CD4-positive, alpha-beta T cell (primary cell): ENCODE measurements at regions of chr19 and their contacts with region 1.

Region 1: DNA sequence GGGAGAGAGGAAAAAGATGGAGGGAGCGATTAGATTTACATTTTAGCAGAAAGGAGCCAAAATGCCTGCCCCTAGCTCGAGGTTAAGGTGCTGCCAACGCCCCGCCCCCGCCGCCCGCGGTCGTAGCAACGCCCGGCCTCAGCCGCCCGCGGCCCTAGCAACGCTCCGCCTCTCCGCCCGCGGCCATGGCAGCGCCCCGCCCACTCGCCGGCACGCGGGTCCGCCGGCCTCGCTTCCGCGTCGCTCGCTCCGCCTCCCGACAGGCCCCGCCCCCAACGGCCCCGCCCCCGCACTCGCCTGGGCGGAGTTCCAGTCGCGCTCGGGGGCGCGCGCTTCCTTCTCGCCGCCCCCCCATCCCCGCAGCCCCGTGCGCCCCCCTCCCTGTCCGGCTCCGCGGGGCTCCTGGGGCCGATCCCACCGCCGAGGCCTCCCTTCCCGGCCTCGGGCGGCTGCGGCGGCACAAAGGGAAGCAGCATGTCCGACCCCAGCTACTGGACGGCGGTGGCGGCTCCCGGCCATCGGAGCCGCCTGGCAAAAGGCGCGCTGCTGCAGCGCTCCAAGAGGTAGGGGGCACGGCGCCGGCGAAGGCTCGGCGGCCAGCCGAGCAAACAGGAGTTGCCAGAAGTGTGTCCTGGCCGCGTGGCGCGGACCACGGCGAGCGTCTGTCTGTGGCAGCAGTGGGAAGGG is 20.3 kb downstream of the MAST3 start:
- DNase-seq: peak; percentile 88 to 99 (median 96)
- ATAC-seq: peak; percentile 72
- H3K4me3 ChIP-seq: peak overlapping the region; percentile 86
- H3K4me3 Mint-ChIP-seq: peak overlapping the region; percentile 90
- H3K27ac ChIP-seq: peak overlapping the region; percentile 77 to 80
- H3K27ac Mint-ChIP-seq: peak overlapping the region; percentile 97
- H3K4me1 ChIP-seq: peaks cover 58% of the 10 kb centered on the region
- H3K4me1 Mint-ChIP-seq: peaks cover 37% of the 10 kb centered on the region
- H3K27me3 ChIP-seq: no peaks in the 10 kb centered on the region
- H3K27me3 Mint-ChIP-seq: no peaks in the 10 kb centered on the region
- CTCF ChIP-seq: no peak

Region 2: DNA sequence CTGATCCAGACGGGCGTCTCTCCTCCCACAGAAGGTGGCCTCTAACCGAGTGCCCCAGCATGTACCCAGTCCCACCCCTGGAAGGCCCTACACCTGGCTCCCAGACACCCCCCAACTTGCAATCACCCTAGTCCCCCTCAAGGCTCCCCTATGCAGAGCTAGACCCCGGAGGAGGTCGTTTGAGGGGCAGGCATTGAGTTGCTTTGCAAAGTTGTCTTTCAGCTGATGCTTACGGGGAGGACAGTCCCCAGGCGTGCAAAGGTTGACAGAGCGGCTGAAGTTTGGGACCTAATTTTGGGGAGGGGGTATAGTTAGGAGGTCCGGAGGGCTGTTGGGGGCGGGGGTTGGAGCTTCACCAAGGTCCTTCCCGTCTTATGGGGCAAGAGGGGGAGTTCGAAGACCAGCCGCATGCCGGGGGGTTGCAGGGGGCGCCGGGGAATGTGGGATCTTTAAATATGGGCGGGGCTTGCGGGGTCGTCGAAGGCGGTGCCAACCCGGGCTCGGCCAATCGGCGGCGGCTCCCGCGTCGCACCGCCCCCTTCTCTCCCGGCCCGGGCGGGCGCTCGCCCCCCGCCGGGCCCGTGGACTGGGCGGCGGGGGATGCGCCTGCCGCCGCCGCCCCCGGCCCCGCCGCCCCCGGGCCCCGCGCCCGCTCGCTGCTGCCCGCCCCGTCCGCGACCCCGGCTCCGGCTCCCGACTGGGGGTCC is 151.1 kb before region 1 on chr19 and contains the start of gene KCNN1:
- CTCF ChIA-PET with region 1: no interaction called
- POLR2A ChIA-PET with region 1: no interaction called
- intact Hi-C with region 1: no loop called
- DNase-seq: peak in 2 of 14 experiments; percentile 25 to 29
- ATAC-seq: no peak
- H3K4me3 ChIP-seq: no peak within 1 kb of the TSS
- H3K4me3 Mint-ChIP-seq: peak within 1 kb of the TSS; percentile 34
- H3K27ac ChIP-seq: no peak within 1 kb of the TSS
- H3K27ac Mint-ChIP-seq: no peak within 1 kb of the TSS
- H3K4me1 ChIP-seq: peaks cover 13% of the 10 kb centered on the region
- H3K4me1 Mint-ChIP-seq: peaks cover 9% of the 10 kb centered on the region
- H3K27me3 ChIP-seq: peaks cover 30% of the 10 kb centered on the region in 2 experiments
- H3K27me3 Mint-ChIP-seq: peaks cover 56% of the 10 kb centered on the region
- CTCF ChIP-seq: no peak
- total RNA-seq, gene KCNN1: not detected

Region 3: DNA sequence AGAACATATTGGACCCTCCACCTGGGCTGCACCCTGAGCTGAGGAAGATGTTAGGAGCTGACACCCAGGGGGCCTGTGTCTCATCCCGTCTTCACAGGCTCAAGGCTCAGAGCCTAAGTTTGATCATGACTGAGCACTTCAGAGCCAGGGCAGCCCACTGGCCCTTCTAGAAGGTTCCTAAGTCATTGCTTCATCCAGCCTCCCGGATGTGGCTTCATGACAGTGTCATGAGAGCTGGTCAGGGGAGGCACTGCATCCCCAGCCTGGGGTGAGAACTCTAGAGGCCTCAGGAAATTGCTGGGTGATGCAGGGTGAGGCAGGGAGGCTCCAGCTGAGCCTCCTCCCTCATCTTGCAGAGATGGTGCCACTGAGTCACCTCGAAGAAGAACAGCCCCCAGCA is 10.2 kb after region 1 on chr19:
- CTCF ChIA-PET with region 1: no interaction called
- POLR2A ChIA-PET with region 1: interaction called, 14 read pairs
- intact Hi-C with region 1: no loop called
- DNase-seq: peak in 3 of 14 experiments; percentile 31 to 49 (median 39)
- ATAC-seq: no peak
- H3K4me3 ChIP-seq: no peak overlapping the region
- H3K4me3 Mint-ChIP-seq: no peak overlapping the region
- H3K27ac ChIP-seq: no peak overlapping the region
- H3K27ac Mint-ChIP-seq: no peak overlapping the region
- H3K4me1 ChIP-seq: peaks cover 5% of the 10 kb centered on the region
- H3K4me1 Mint-ChIP-seq: no peaks in the 10 kb centered on the region
- H3K27me3 ChIP-seq: no peaks in the 10 kb centered on the region
- H3K27me3 Mint-ChIP-seq: no peaks in the 10 kb centered on the region
- CTCF ChIP-seq: no peak

Region 4: GRCh38 chr19:18160971-18161635 is 43.3 kb after region 1 on chr19:
- CTCF ChIA-PET with region 1: no interaction called
- POLR2A ChIA-PET with region 1: interaction called, 3 read pairs
- intact Hi-C with region 1: loop called in 1 of 2 experiments (anchors 2 kb)
- DNase-seq: peak; percentile 58 to 92 (median 82)
- ATAC-seq: peak; percentile 99
- H3K4me3 ChIP-seq: peak overlapping the region; percentile 20
- H3K4me3 Mint-ChIP-seq: no peak overlapping the region
- H3K27ac ChIP-seq: no peak overlapping the region
- H3K27ac Mint-ChIP-seq: no peak overlapping the region
- H3K4me1 ChIP-seq: peaks cover 21% of the 10 kb centered on the region
- H3K4me1 Mint-ChIP-seq: peaks cover 12% of the 10 kb centered on the region
- H3K27me3 ChIP-seq: no peaks in the 10 kb centered on the region
- H3K27me3 Mint-ChIP-seq: no peaks in the 10 kb centered on the region
- CTCF ChIP-seq: peak; percentile 53

Region 5: DNA sequence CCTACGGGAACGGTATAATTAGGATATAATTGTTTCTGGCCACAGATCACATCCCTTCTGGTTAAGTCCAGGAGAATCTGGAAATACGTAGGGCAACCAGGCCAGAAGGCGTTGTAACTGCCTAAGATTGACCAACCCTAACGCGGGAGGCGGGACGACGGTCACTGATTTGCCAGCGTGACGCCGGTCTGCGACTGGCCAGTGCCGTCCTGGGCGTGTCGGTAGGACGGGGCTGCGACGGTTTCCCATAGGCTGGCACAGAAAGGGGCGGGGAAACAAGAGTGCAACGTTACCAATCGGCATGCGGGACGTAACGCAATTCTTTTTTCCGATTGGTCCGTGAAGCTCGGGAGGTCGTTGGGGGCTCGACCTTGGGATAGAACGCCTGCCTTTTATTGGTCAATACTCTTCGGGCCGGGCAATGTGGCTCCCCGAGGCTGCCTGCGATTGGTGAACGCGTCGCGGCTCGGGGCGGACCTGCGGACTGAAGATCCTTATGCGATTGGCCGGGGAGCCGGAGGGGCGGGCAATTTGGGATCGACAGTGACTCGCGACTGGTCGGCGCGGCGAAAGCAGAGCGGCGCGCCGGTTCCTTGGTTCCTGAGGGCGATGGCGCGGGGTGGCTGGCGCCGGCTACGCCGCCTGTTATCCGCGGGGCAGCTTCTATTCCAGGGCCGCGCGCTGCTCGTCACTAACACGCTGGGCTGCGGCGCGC is 75.0 kb after region 1 on chr19 and contains the start of gene MPV17L2:
- CTCF ChIA-PET with region 1: interaction called, 4 read pairs
- POLR2A ChIA-PET with region 1: interaction called, 5 read pairs
- intact Hi-C with region 1: loop called in 1 of 2 experiments (anchors 5 kb)
- DNase-seq: peak; percentile 94 to 100 (median 98)
- ATAC-seq: peak; percentile 87
- H3K4me3 ChIP-seq: peak within 1 kb of the TSS; percentile 92
- H3K4me3 Mint-ChIP-seq: peak within 1 kb of the TSS; percentile 90
- H3K27ac ChIP-seq: peak within 1 kb of the TSS; percentile 73 to 82
- H3K27ac Mint-ChIP-seq: peak within 1 kb of the TSS; percentile 81
- H3K4me1 ChIP-seq: peaks cover 30% of the 10 kb centered on the region
- H3K4me1 Mint-ChIP-seq: peaks cover 29% of the 10 kb centered on the region
- H3K27me3 ChIP-seq: no peaks in the 10 kb centered on the region
- H3K27me3 Mint-ChIP-seq: no peaks in the 10 kb centered on the region
- CTCF ChIP-seq: no peak
- total RNA-seq, gene MPV17L2: 2.8 to 3.9 TPM

Region 6: DNA sequence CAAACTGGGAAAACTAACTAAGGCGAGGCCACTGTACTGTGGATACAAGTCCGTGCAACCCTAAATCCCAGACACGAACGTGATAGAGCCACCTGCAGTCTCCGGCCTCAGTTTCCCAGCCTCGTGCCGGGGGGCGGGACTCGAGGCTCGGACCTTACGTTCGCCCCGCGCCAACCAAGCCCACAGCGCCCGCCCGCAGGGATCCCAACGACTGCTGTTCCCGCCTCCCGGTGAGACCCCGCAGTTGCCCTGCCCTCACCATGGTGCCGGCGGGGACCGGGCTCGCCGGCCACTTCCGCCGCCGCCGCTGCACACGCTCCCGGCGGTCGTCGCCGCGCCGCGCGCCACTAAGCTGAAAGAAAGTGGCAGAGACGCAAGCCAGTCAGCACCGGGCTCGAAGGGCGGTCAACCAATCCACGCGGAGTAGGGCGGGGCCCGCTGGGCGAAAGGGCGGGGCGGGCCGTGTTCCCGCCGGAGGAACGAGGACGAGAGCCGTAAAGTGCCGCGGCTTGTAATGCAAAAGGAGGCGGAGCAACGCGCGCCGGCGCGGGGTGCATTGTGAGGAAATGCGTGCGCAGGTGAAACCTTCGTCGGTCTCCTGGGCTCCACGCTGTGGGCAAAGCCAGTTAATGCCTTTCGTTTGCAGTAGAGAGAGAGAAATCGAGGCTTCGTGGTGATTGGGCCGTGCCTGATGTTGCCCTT is 205.1 kb after region 1 on chr19 and contains the start of gene LSM4:
- CTCF ChIA-PET with region 1: no interaction called
- POLR2A ChIA-PET with region 1: no interaction called
- intact Hi-C with region 1: loop called in 1 of 2 experiments (anchors 10 kb)
- DNase-seq: peak; percentile 99 to 100 (median 100)
- ATAC-seq: peak; percentile 91
- H3K4me3 ChIP-seq: peak within 1 kb of the TSS; percentile 87
- H3K4me3 Mint-ChIP-seq: peak within 1 kb of the TSS; percentile 73
- H3K27ac ChIP-seq: peak within 1 kb of the TSS; percentile 83 to 86
- H3K27ac Mint-ChIP-seq: peak within 1 kb of the TSS; percentile 90
- H3K4me1 ChIP-seq: peaks cover 63% of the 10 kb centered on the region
- H3K4me1 Mint-ChIP-seq: peaks cover 54% of the 10 kb centered on the region
- H3K27me3 ChIP-seq: no peaks in the 10 kb centered on the region
- H3K27me3 Mint-ChIP-seq: no peaks in the 10 kb centered on the region
- CTCF ChIP-seq: peak; percentile 73
- total RNA-seq, gene LSM4: 40.2 to 47.4 TPM